ENCODE measurements at regions of chr14 and their contacts with region 1.

Region 1: DNA sequence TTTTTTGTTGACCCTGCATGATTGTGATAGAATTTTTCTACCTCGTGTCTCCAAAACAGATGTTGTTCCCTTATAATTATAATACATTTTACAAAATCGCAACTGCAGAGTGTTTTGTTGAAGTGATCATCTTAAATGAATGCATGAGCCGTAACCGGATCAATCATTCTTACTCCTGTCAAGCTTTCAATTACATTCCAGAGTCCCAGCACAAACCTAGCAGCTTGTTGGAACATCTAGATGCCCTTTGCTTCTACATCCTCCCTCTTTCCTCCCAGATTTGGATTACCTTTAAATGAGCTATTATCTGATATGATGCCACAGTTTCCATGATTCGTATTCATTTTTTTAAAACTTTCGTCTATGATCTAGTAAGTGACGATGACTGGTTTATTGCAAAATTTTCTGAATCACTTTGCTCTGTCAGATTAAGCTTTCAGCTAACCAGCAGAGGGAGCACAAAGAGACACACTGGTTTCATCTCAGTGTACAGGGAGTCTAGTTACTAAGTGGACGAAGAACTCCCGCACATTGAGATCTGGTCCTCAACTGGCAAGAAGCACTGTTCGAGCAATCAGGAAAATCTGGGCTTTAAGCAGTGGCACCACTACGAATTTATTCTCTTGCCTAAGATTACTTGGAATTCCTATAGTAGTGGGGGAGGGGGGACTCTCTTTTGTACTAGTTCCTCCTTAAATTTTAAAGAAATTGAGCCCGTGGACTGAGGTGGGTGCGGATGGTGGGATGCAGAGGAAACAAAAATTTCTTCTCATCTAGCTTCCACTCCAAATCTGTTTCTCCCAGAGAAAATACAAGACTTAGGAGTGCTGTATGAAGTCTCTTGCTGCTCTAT is 40.9 kb downstream of the TSHR start:
- DNase-seq: no peak
- ATAC-seq: peak; percentile 97

Region 2: DNA sequence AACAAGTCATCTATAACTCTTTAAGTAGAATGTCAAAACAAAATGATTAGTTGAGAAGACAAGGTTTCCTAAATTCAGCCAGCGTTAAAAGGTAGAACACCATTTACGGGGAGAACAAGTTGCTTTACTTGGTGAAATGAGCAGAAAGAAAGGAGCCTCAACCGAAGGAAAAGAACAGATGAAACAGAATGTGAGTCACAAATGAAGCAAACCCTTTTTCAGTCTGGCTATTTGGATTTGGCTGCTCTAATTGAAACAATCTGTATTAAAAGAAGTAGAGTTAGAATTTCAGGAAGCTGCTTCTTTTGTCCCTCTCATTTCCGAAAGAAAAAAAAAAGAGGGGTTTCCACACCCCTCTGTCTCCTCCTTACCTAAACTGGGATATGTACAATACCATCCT is 89.3 kb before region 1 on chr14:
- intact Hi-C with region 1: no loop called
- DNase-seq: no peak
- ATAC-seq: no peak

Region 3: DNA sequence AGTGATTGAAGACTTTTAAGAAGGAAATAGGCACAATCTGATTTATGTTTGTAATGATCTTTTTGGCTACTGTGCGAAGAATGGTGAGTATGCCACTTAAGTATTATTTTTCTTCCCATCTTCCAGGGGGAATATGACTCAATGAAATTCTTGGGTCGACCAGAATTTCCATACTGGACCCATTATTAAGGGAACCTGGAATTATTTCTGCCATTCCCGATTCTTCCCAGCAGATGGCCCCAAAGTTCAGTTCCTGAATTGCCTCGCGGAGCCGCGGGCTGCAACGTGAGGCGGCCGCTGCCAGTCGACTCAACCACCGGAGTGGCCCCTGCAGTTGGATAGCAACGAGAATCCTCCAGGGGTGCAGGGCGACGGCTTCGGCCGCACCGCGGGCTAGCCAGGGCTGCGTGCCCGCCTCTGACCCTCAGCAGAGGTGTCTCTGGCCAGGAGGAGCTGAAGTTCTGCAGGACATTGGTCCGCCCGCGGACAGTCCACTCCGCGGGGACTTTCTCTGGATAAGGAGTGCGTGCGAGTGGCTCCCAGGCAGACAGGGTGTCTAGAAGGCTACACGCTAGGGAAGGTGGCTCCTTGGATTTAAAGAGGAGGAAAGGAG is 41.5 kb before region 1 on chr14:
- intact Hi-C with region 1: loop called (anchors 5 kb)
- DNase-seq: peak; percentile 87
- ATAC-seq: peak; percentile 96

Region 4: GRCh38 chr14:81085596-81085995 is 89.3 kb after region 1 on chr14:
- intact Hi-C with region 1: no loop called
- DNase-seq: no peak
- ATAC-seq: no peak

Region 5: GRCh38 chr14:81103443-81103842 is 107.2 kb after region 1 on chr14:
- intact Hi-C with region 1: no loop called
- DNase-seq: no peak
- ATAC-seq: no peak

Region 6: GRCh38 chr14:81164167-81164774 is 168.0 kb after region 1 on chr14:
- intact Hi-C with region 1: loop called (anchors 10 kb)
- DNase-seq: no peak
- ATAC-seq: peak; percentile 84

Region 7: GRCh38 chr14:81219210-81219758 is 223.0 kb after region 1 on chr14:
- intact Hi-C with region 1: loop called (anchors 10 kb)
- DNase-seq: peak; percentile 91
- ATAC-seq: peak; percentile 76

Measured in Right ventricle myocardium superior (tissue), 1 donor.